Activated CD8-positive, alpha-beta T cell treated with anti-CD3 and anti-CD28 coated beads for 36 hours (primary cell): ENCODE measurements at regions of chr12 and their contacts with region 1.

Region 1: DNA sequence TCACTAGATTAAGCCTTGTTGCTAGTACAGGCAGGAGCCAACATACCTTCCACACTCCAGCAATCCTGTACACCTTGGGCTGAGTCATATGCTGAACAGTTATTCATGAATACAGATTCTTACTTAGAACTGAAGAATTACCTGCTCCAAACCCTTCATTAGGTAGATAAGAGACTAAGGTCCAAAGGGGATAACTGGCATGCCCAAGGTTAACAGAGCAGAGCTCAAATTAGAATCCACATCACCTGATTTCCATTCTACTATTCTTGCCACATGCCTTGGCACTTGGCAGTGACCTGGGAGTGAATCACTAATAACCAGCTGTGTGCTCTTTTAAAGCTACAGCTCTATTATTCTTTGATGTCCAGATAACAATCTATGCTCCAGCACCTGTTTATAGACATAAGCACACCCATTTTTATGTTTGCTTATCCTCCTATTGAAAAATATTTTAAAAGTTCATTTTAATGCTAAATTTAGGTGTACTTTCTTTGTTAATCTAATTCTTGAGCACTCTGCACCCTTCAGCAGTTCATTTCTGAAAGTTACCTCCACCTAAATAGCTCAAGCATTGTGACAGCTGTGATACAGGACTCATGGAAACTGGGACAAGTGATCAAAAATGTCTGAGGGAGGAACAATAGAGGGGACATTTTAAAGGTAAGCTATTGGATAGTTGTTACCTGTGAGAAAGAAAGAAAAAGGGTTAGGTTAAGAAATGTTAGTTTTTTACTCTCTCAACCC is 19.4 kb downstream of the LPCAT3 start:
- DNase-seq: no peak
- ATAC-seq: no peak
- H3K4me3 Mint-ChIP-seq: no peak overlapping the region
- H3K27ac Mint-ChIP-seq: no peak overlapping the region
- H3K4me1 Mint-ChIP-seq: peaks cover 1% of the 10 kb centered on the region
- H3K27me3 Mint-ChIP-seq: no peaks in the 10 kb centered on the region
- CTCF ChIP-seq: no peak

Region 2: GRCh38 chr12:6978609-6979011 is 20.3 kb before region 1 on chr12:
- CTCF ChIA-PET with region 1: no interaction called
- POLR2A ChIA-PET with region 1: interaction called, 10 read pairs
- intact Hi-C with region 1: no loop called
- DNase-seq: no peak
- ATAC-seq: no peak
- H3K4me3 Mint-ChIP-seq: no peak overlapping the region
- H3K27ac Mint-ChIP-seq: no peak overlapping the region
- H3K4me1 Mint-ChIP-seq: peaks cover 18% of the 10 kb centered on the region
- H3K27me3 Mint-ChIP-seq: no peaks in the 10 kb centered on the region
- CTCF ChIP-seq: no peak